IMR-90 (cell line): ENCODE measurements at regions of chr1 and their contacts with region 1.

Region 1: GRCh38 chr1:209248649-209249279 is 334.8 kb upstream of the CAMK1G start:
- DNase-seq: peak; percentile 54
- ATAC-seq: peak; percentile 82
- H3K4me3 ChIP-seq: no peak overlapping the region
- H3K27ac ChIP-seq: no peak overlapping the region
- H3K4me1 ChIP-seq: no peaks in the 10 kb centered on the region
- H3K27me3 ChIP-seq: no peaks in the 10 kb centered on the region
- CTCF ChIP-seq: peak; percentile 77
- POLR2A ChIP-seq: no peak
- RAD21 ChIP-seq: peak; percentile 61

Region 2: DNA sequence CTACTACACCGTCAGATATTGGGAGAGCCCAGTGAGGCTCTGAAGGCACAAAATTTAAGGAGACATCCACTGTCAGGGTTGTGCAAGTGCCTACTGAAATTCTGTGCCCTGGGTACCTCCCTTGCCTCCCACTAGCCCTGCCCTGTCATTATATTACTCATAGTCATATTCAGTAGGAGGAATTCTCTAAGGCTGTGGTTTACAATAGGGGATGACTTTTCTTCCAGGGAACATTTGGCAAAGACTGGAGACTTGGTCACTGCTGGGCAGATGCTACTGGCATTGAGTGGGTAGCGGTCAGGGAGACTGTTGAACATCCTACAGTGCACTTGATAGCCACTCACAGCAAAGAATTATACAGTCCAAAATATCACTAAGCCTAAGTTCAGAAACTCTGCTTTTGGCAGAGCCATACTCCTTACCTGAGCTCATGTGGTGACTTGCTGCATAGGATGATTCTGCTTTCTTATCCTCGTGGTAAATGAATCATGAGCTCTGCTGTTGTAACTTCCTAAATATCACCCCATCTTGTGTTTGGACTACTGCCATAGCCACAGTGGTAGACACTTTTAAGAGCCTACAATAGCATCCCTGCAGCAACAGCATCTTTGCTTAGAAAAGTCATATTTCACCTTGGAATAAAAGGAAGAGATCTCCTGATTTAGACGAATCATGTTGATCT is 441.2 kb before region 1 on chr1:
- CTCF ChIA-PET with region 1: no interaction called
- POLR2A ChIA-PET with region 1: no interaction called
- dilution Hi-C with region 1: no loop called
- in situ Hi-C with region 1: no loop called
- intact Hi-C with region 1: no loop called
- DNase-seq: no peak
- ATAC-seq: no peak
- H3K4me3 ChIP-seq: no peak overlapping the region
- H3K27ac ChIP-seq: no peak overlapping the region
- H3K4me1 ChIP-seq: no peaks in the 10 kb centered on the region
- H3K27me3 ChIP-seq: no peaks in the 10 kb centered on the region
- CTCF ChIP-seq: no peak
- POLR2A ChIP-seq: no peak
- RAD21 ChIP-seq: no peak

Region 3: DNA sequence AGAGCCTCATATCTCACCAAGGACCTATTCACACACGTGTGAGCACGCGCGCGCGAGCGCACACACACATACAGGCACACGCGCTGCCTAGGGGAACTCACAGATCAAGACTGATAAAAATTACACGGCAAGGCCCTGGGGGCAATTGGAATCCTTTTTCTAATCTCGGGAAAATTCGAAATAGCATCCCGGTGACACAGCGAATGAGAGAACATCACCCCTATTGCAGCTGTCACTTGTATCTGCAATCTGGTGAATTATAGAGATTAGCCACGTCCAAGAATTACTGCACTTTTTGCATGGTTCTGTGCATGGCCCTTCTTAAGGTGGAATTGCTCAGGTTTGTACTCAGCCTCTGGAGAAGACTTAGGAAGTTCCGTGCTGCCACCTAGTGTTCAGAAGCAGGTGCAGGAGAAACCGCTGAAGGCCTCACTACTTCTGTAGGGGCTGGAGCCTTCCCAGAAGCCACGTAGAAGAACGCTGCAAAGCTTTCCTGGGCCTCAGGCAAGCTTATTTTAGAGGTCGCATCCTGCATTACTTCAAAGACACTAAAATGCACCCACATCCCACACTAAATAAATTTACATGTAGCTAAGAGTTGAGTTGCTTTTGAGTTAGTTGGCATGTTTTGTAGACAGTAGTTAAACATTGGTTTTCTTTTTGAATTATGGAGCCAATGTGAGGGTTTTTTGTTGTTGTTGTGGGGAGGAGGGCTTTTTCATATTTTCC is 105.5 kb after region 1 on chr1:
- CTCF ChIA-PET with region 1: no interaction called
- POLR2A ChIA-PET with region 1: no interaction called
- dilution Hi-C with region 1: no loop called
- in situ Hi-C with region 1: no loop called
- intact Hi-C with region 1: loop called (anchors 2 kb)
- DNase-seq: peak; percentile 92
- ATAC-seq: peak; percentile 97
- H3K4me3 ChIP-seq: no peak overlapping the region
- H3K27ac ChIP-seq: no peak overlapping the region
- H3K4me1 ChIP-seq: no peaks in the 10 kb centered on the region
- H3K27me3 ChIP-seq: no peaks in the 10 kb centered on the region
- CTCF ChIP-seq: peak; percentile 84
- POLR2A ChIP-seq: no peak
- RAD21 ChIP-seq: peak; percentile 81

Region 4: DNA sequence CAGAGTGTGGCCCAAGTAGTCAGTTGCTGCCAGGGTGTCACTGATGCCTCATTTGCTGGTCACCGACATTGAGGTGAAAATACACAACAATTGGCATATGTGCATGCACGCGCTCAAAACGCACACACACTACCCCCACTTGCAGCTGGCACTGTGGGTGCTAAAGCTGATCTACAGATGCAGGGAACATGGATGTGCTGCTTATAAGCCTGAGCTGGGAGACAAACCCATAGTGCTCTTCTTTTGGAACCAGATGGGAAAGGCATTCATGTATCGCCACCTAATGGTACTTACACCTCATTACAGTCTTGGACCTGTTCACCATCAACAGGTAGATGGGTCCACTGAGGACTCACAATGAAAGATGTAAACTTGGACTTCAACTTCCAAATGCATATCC is 264.5 kb after region 1 on chr1:
- CTCF ChIA-PET with region 1: no interaction called
- POLR2A ChIA-PET with region 1: no interaction called
- dilution Hi-C with region 1: no loop called
- in situ Hi-C with region 1: no loop called
- intact Hi-C with region 1: loop called (anchors 2 kb)
- DNase-seq: peak; percentile 46
- ATAC-seq: peak; percentile 77
- H3K4me3 ChIP-seq: no peak overlapping the region
- H3K27ac ChIP-seq: no peak overlapping the region
- H3K4me1 ChIP-seq: no peaks in the 10 kb centered on the region
- H3K27me3 ChIP-seq: peaks cover 2% of the 10 kb centered on the region; the same call in 1 of the 2 replicates
- CTCF ChIP-seq: peak; percentile 56
- POLR2A ChIP-seq: no peak
- RAD21 ChIP-seq: peak; percentile 78